ENCODE measurements at regions of chr20 and their contacts with region 1.

Region 1: GRCh38 chr20:23435626-23436539 is 3.6 kb upstream of the CSTL1 start:
- DNase-seq: no peak
- H3K4me3 ChIP-seq: no peak overlapping the region
- H3K27ac ChIP-seq: no peak overlapping the region
- H3K4me1 ChIP-seq: peaks cover 0 to 4% (median 2%) of the 10 kb centered on the region in 4 experiments
- H3K27me3 ChIP-seq: no peaks in the 10 kb centered on the region

Region 2: DNA sequence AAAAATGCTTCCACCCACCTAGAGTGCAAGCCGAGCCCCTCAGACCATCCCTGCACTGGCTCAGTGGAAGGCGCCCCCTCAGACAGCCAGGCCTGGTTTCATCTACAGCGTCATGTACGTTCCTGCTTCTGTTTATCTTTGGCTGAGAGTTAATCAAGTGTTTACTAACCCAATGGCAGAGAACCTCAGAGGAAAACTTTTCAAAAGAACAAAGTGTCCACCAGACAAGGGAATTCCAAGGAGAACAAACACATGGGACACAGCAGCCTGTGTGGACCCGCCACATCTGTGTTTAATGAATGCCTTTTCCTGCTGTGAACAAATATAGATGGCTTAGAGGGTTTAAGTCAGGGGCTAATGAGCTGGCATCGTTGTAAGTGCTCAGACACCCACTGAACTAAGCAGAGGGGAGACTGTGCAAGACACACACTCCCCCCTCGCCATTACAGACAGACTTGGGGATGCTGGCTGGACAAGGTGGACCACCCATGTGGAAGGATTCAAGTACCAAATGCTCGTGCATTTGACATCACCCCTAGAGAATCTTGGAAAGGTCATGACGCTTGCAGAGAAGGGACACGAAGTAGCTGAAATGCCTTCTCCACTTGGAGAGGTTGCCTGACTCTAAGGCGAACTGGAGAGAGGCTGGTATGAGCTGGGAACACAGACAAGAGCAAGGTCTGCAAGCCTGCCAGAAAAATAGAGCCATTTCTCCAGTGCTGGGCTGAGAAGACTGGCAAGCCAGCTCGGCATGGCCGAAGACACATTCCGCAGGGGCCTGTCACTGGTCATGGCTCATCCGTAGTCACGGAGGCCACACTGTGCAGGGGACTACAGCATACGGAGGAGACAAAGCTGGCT is 138.8 kb before region 1 on chr20:
- CTCF ChIA-PET with region 1: no interaction called
- POLR2A ChIA-PET with region 1: no interaction called
- DNase-seq: no peak
- H3K4me3 ChIP-seq: no peak overlapping the region
- H3K27ac ChIP-seq: no peak overlapping the region
- H3K4me1 ChIP-seq: no peaks in the 10 kb centered on the region
- H3K27me3 ChIP-seq: peaks cover 0 to 5% (median 0%) of the 10 kb centered on the region in 5 experiments

Region 3: GRCh38 chr20:23407781-23408464 is 28.0 kb before region 1 on chr20:
- CTCF ChIA-PET with region 1: no interaction called
- POLR2A ChIA-PET with region 1: no interaction called
- DNase-seq: peak in 2 of 3 donors; percentile 39 to 49
- H3K4me3 ChIP-seq: no peak overlapping the region
- H3K27ac ChIP-seq: no peak overlapping the region
- H3K4me1 ChIP-seq: peaks cover 0 to 2% (median 0%) of the 10 kb centered on the region in 4 experiments
- H3K27me3 ChIP-seq: no peaks in the 10 kb centered on the region

Region 4: DNA sequence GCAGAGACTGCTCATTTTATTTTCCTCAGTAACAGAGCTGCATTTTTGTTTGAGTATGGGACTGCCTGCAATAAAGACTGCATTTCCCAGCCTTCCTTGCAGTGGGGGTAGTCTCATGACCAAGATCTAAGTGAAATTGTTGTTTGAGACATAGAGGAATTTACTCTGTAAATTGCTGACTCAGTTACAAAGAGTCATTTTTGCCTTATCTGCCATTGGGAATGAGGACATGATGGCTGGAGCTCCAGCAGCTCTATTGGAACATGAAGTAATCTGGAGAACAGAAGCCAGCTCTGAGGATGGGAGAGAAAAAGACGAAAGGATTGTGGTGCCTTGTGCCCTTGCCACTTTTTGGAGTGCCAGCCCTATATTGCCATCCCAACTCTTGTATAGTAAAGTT is 18.9 kb after region 1 on chr20:
- CTCF ChIA-PET with region 1: no interaction called
- POLR2A ChIA-PET with region 1: no interaction called
- DNase-seq: no peak
- H3K4me3 ChIP-seq: no peak overlapping the region
- H3K27ac ChIP-seq: no peak overlapping the region
- H3K4me1 ChIP-seq: peaks cover 7 to 34% (median 22%) of the 10 kb centered on the region in 4 experiments
- H3K27me3 ChIP-seq: no peaks in the 10 kb centered on the region

Region 5: GRCh38 chr20:23606652-23607049 is 170.8 kb after region 1 on chr20:
- CTCF ChIA-PET with region 1: interaction called, 118 read pairs
- POLR2A ChIA-PET with region 1: no interaction called
- DNase-seq: peak; percentile 67 to 84 (median 77)
- H3K4me3 ChIP-seq: no peak overlapping the region
- H3K27ac ChIP-seq: no peak overlapping the region
- H3K4me1 ChIP-seq: peaks cover under 1 to 22% (median 14%) of the 10 kb centered on the region in 4 experiments
- H3K27me3 ChIP-seq: no peaks in the 10 kb centered on the region

Measured in common myeloid progenitor, CD34-positive (primary cell).